ENCODE measurements at regions of chr9 and their contacts with region 1.

Region 1: DNA sequence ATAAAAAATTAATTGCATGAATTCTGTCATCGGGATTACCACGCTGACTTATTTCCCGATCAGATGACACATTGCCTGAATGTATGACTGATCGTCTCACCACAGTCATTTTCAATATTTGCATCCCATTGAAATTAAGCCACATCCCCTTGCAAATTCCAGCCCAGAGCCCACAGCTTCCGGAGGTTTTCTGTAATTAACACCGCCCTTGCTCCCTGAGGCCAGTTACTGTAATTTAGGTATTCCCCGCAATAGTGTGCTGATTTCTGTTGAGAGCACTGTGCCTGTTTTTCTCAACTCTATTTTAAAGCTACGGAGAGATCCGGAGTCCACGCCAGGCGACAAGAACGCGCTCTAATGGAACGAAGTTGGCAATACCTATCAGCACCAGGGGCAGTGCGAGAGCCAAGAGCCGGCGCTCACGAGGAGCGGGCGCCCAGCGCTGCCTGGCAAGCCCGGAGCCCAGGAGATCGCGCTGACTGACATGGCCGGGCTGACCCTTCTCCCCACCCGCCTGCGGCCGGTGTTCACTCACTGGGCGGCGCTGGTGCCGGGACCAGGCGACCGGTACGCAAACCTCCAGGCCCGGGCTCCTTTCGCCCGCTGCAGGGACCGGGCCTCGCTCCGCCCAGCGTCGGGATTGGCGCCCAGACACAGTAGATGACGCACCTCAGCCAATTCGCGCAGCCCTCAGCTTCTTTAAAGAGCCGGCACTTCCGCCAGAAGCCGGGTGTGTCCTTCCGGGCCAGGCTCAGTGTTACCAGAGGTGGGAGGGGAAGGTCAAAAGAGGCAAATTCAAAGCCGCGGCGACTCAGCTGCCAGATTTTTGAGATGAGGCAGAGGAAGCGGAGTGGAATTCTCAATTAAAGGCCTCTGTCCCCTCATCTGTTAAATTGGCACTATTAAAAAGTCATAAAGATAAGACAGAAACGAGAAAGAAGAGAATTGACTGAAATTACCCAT is at the start of gene PLGRKT:
- DNase-seq: peak; percentile 90
- H3K4me3 Mint-ChIP-seq: peak within 1 kb of the TSS; percentile 93
- H3K27ac Mint-ChIP-seq: peak within 1 kb of the TSS; percentile 93
- H3K4me1 Mint-ChIP-seq: peaks cover 66% of the 10 kb centered on the region
- H3K27me3 Mint-ChIP-seq: no peaks in the 10 kb centered on the region
- total RNA-seq, gene PLGRKT: 43.8 and 44.8 TPM in 2 replicates

Region 2: GRCh38 chr9:4297151-4297785 is 1140.3 kb before region 1 on chr9:
- intact Hi-C with region 1: loop called (anchors 10 kb)
- DNase-seq: peak; percentile 11
- H3K4me3 Mint-ChIP-seq: peak overlapping the region; percentile 95
- H3K27ac Mint-ChIP-seq: peak overlapping the region; percentile 91
- H3K4me1 Mint-ChIP-seq: peaks cover 45% of the 10 kb centered on the region
- H3K27me3 Mint-ChIP-seq: peaks cover 42% of the 10 kb centered on the region

Region 3: DNA sequence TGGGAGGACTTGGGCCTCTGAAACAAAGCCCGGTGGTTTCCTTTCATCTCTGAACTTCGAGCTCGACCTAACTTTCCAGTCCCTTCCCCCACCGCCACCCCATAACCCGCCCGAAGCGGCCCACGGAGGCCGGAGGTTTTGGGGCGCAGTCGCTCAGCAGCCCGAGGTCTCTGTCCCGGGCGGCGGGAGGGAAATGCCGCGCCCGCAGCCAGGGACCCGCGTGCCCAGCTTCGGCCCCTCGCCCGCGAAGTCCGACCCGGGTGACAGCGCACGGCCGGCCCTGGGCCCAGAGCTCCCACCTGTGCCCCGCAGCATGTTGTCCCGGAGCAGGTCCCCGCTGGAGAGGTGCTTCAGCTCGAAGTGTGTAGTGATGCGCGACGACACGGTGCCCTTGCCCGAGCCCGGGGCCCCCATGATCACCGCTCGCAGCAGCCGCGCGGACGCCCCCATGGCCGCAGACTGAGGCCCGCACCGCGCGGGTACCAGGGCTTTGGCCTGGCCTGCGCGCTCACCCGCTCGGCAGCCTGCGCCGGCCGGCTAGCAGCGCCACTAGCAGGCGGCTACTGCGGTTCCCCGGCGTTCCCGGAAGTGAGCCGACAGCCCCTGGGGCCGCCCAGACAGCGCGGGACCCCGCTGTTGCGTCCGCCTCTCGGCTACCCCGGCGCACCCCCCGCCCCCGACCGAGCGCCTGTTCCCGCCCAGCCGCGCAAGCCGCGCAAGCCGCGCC is 696.7 kb before region 1 on chr9 and contains the start of gene AK3:
- intact Hi-C with region 1: loop called (anchors 2 kb)
- DNase-seq: peak; percentile 81
- H3K4me3 Mint-ChIP-seq: peak within 1 kb of the TSS; percentile 89
- H3K27ac Mint-ChIP-seq: peak within 1 kb of the TSS; percentile 92
- H3K4me1 Mint-ChIP-seq: peaks cover 29% of the 10 kb centered on the region
- H3K27me3 Mint-ChIP-seq: no peaks in the 10 kb centered on the region
- total RNA-seq, gene AK3: 23.9 and 28.5 TPM in 2 replicates

Region 4: DNA sequence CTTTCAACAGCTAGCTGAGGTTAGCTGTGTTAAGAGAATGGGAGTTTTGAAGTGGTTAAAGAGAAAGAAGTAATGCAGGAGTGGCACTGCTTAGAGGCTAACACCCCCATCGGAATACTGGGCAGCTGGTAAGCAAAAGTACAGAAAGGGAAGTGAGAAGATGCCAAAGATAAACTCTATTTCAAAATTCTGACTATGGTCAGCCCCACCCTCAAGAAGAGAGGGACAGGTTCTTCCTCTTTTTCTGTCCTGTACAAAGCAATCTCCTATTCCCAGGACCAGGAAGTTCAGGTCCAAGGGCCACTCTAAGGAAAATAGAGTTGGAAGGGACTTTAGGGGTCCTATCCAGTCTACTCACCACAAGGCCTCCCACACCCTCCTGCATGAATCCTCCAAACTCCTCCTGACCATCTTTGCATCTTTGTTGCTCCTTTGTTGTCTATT is 498.4 kb before region 1 on chr9:
- intact Hi-C with region 1: loop called (anchors 5 kb)
- DNase-seq: peak; percentile 33
- H3K4me3 Mint-ChIP-seq: peak overlapping the region; percentile 5
- H3K27ac Mint-ChIP-seq: peak overlapping the region; percentile 74
- H3K4me1 Mint-ChIP-seq: peaks cover 75% of the 10 kb centered on the region
- H3K27me3 Mint-ChIP-seq: no peaks in the 10 kb centered on the region

Region 5: GRCh38 chr9:5450359-5451091 is 13.0 kb after region 1 on chr9 and contains the start of gene CD274:
- intact Hi-C with region 1: loop called (anchors 1 kb)
- DNase-seq: peak; percentile 85
- H3K4me3 Mint-ChIP-seq: peak within 1 kb of the TSS; percentile 96
- H3K27ac Mint-ChIP-seq: peak within 1 kb of the TSS; percentile 90
- H3K4me1 Mint-ChIP-seq: peaks cover 85% of the 10 kb centered on the region
- H3K27me3 Mint-ChIP-seq: no peaks in the 10 kb centered on the region
- total RNA-seq, gene CD274: 60.4 and 61.7 TPM in 2 replicates

Region 6: DNA sequence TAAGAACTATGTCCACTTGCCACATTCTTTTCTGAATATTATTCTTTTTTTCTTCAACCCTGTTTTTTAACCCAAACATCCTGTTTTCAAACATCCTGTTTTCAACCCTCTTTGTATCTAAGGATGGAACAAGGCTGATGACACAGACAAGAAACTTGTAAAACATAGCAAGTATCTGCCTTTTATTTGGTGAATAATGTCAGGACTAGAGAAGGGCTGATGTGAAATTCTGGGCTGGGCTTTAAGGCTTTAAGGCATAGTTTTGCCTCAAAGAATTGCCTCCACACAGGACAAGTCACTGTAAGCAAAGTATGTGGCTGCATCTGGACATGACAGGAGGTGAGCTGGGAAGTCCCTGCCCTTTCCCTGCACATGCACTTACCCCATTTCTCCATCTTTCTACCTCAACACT is 148.9 kb after region 1 on chr9:
- intact Hi-C with region 1: loop called (anchors 1 kb)
- DNase-seq: peak; percentile 26
- H3K4me3 Mint-ChIP-seq: peak overlapping the region; percentile 35
- H3K27ac Mint-ChIP-seq: peak overlapping the region; percentile 95
- H3K4me1 Mint-ChIP-seq: peaks cover 64% of the 10 kb centered on the region
- H3K27me3 Mint-ChIP-seq: no peaks in the 10 kb centered on the region

Region 7: DNA sequence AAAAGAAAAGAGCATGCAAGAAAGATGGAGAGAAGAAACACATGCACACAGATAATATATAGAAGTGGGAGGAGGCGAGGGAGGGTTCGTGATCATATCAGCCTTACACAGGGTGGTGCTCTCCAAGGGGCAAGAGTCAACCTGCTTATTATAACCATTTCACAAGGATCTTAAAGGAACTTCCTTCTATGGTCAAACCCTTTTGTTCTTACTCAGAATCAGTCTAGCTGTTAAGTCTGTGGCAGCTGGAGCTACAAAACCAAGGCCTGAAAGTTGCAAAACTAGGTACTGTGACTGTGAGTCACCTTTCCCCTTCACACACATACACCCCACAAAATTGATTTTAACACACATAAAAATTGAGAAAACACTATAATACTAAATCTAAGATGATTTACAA is 413.9 kb after region 1 on chr9:
- intact Hi-C with region 1: loop called (anchors 5 kb)
- DNase-seq: peak; percentile 49
- H3K4me3 Mint-ChIP-seq: peak overlapping the region; percentile 28
- H3K27ac Mint-ChIP-seq: peak overlapping the region; percentile 68
- H3K4me1 Mint-ChIP-seq: peaks cover 69% of the 10 kb centered on the region
- H3K27me3 Mint-ChIP-seq: no peaks in the 10 kb centered on the region